Posterior vena cava (tissue), 2 donors: ENCODE measurements at regions of chrX and their contacts with region 1.

Region 1: GRCh38 chrX:151815398-151815797 is 80.9 kb downstream of the CNGA2 start:
- DNase-seq: no peak

Region 2: DNA sequence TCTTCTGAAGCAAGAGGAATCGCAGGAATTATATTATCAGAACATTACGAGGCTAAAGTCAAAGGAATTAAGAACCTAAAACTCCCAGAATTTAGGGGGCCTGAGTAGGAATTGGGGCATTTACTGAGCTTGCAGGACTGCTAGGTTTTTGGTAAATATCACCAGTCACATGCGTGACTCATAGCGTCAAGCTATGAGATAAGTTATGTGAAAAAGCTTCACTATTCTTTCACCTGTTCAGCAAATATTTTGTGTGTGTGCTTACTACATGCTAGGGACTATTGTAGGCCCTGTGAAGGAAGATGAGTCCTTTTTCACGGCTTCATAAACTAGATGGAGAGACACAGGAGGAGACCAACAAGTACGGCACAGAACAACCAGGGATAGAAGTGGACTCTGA is 270.7 kb after region 1 on chrX:
- intact Hi-C with region 1: loop called in 1 of 2 experiments (anchors 10 kb)
- DNase-seq: no peak